Panc1 (cell line): ENCODE measurements at regions of chr1 and their contacts with region 1.

Region 1: DNA sequence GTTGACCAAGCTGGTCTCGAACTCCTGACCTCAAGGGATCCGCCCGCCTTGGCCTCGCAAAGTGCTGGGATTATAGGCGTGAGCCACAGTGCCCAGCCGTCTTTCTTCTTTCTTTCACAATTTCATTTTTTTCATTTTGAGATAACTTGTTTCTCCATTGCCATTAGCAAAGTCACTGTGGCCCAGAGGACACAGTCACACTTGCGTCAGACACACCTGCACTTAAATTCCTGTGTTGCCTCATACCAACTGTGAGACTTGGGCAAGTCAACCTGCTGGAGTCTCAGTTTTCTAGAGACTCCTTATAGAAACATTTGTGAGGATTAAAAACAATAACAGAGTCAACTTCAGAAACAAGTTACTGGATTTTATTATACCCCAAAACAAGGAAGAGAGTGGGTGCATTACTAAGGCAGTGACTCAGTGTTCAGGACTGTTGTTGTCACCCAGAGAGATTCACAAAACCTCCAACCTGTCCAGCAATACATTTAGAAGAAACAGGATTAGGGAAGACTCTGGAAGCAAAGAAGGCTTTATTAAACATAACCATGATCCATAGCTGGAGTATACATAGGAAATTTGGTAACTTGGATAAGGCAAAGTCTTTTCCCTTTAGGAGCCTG is 2.6 kb downstream of the TEDDM1 start:
- DNase-seq: no peak
- ATAC-seq: no peak
- H3K4me3 ChIP-seq: no peak overlapping the region
- H3K27ac ChIP-seq: no peak overlapping the region
- H3K4me1 ChIP-seq: no peaks in the 10 kb centered on the region
- H3K27me3 ChIP-seq: peaks cover 7% of the 10 kb centered on the region
- CTCF ChIP-seq: no peak

Region 2: GRCh38 chr1:181918880-181919525 is 478.9 kb before region 1 on chr1:
- CTCF ChIA-PET with region 1: no interaction called
- POLR2A ChIA-PET with region 1: no interaction called
- in situ Hi-C with region 1: no loop called
- intact Hi-C with region 1: no loop called
- DNase-seq: no peak
- ATAC-seq: no peak
- H3K4me3 ChIP-seq: no peak overlapping the region
- H3K27ac ChIP-seq: no peak overlapping the region
- H3K4me1 ChIP-seq: no peaks in the 10 kb centered on the region
- H3K27me3 ChIP-seq: no peaks in the 10 kb centered on the region
- CTCF ChIP-seq: no peak

Region 3: DNA sequence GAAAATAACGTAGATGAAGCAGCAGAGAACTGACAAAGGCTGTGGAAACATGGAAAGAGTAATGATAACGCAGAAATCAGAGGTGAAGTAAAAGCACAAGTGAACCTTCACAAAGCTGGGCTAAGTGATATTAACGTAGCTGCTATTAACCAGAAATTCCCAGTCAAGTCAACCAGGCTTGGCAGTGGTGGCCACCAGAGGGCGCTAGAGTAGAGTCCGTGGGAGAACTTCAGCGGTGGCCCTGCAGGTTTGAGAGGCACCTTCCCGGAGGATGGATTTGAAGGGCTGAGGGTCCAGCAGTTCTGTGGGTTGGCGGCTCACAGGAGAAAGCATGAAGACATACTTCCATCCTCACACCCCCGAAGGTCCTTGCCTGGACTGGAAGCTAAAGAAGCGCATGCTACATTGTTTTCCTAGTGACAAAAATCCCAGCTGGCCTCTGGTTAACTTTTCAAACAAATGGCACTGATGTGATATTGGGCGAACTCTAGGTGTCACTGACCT is 254.7 kb before region 1 on chr1:
- CTCF ChIA-PET with region 1: interaction called, 22 read pairs
- POLR2A ChIA-PET with region 1: interaction called, 6 read pairs
- in situ Hi-C with region 1: no loop called
- intact Hi-C with region 1: loop called (anchors 1 kb)
- DNase-seq: peak; percentile 51
- ATAC-seq: peak; percentile 92
- H3K4me3 ChIP-seq: no peak overlapping the region
- H3K27ac ChIP-seq: no peak overlapping the region
- H3K4me1 ChIP-seq: no peaks in the 10 kb centered on the region
- H3K27me3 ChIP-seq: no peaks in the 10 kb centered on the region
- CTCF ChIP-seq: peak; percentile 92

Region 4: GRCh38 chr1:182446033-182446669 is 48.3 kb after region 1 on chr1:
- CTCF ChIA-PET with region 1: no interaction called
- POLR2A ChIA-PET with region 1: no interaction called
- in situ Hi-C with region 1: no loop called
- intact Hi-C with region 1: no loop called
- DNase-seq: peak; percentile 30
- ATAC-seq: peak; percentile 75
- H3K4me3 ChIP-seq: no peak overlapping the region
- H3K27ac ChIP-seq: no peak overlapping the region
- H3K4me1 ChIP-seq: no peaks in the 10 kb centered on the region
- H3K27me3 ChIP-seq: no peaks in the 10 kb centered on the region
- CTCF ChIP-seq: peak; percentile 77